Activated T-helper 2 cell treated with anti-CD3 and anti-CD28 coated beads, Interferon-gamma antibody, Interleukin-2, Interleukin-4, amounts not matched to agents 10 μg/mL and 5 μg/mL and 100 μg/mL, durations not matched to agents 14 hours and 24 hours and 36 hours (primary cell): ENCODE measurements at regions of chr20 and their contacts with region 1.

Region 1: DNA sequence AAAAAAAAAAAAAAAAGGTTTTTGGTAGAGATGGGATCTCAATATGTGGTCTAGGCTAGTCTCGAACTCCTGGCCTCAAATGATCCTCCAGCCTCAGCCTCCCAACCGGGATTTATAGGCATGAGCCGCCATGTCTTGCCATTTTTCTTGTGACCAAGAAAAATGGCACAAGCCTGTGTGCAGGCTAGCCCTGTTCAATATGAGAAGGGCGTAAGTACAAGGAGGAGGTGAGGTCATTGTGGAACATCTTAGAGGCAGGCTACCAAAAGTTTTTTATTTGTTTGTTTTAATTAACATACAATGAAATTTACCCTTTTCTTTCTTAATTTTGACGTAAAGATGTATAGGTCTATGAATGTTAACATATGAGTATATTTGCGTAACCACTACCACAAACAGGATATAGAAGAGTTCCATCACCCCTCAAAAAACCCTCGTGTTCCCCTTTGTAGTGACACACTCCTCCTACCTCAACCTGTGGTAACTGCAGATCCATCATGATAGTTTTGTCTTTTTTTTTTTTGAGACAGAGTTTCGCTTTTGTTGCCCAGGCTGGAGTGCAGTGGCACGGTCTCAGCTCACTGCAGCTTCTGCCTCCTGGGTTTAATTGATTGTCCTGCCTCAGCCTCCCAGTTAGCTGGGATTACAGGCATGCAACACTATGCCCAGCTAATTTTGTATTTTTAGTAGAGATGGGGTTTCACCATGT is 28.3 kb upstream of the KIF3B start:
- DNase-seq: peak; percentile 46
- H3K4me3 Mint-ChIP-seq: no peak overlapping the region
- H3K27ac Mint-ChIP-seq: peak overlapping the region; percentile 96
- H3K4me1 Mint-ChIP-seq: peaks cover 50% of the 10 kb centered on the region
- H3K27me3 Mint-ChIP-seq: no peaks in the 10 kb centered on the region

Region 2: DNA sequence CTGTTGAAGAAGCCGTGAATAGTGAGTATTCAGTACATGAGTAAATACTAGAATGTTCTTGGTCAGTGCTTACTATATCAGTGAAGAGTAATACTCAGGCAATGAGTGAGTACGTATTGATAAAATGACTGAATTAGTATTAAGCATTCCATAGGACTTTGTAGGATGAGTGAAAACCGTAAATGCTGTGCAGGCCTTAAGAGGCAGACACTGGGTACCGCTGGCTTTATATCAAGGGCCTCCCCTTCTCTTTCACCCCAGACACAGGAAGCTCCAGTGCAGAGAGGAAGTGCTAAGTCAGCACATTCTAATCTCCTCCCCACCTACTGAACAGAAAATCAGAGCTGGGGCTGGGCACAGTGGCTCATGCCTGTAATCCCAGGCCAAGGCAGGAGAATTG is 17.3 kb before region 1 on chr20:
- intact Hi-C with region 1: loop called (anchors 1 kb)
- DNase-seq: peak; percentile 20
- H3K4me3 Mint-ChIP-seq: peak overlapping the region; percentile 69
- H3K27ac Mint-ChIP-seq: peak overlapping the region; percentile 97
- H3K4me1 Mint-ChIP-seq: peaks cover 38% of the 10 kb centered on the region
- H3K27me3 Mint-ChIP-seq: no peaks in the 10 kb centered on the region

Region 3: GRCh38 chr20:32277361-32278198 is 28.4 kb after region 1 on chr20 and contains the start of gene KIF3B:
- intact Hi-C with region 1: loop called (anchors 1 kb)
- DNase-seq: peak; percentile 85
- H3K4me3 Mint-ChIP-seq: peak within 1 kb of the TSS; percentile 90
- H3K27ac Mint-ChIP-seq: peak within 1 kb of the TSS; percentile 85
- H3K4me1 Mint-ChIP-seq: peaks cover 41% of the 10 kb centered on the region
- H3K27me3 Mint-ChIP-seq: no peaks in the 10 kb centered on the region
- total RNA-seq, gene KIF3B: 40.6 and 42.2 TPM in 2 replicates

Region 4: GRCh38 chr20:32285621-32286371 is 36.6 kb after region 1 on chr20:
- intact Hi-C with region 1: loop called (anchors 1 kb)
- DNase-seq: peak; percentile 47
- H3K4me3 Mint-ChIP-seq: peak overlapping the region; percentile 60
- H3K27ac Mint-ChIP-seq: peak overlapping the region; percentile 84
- H3K4me1 Mint-ChIP-seq: peaks cover 60% of the 10 kb centered on the region
- H3K27me3 Mint-ChIP-seq: no peaks in the 10 kb centered on the region

Region 5: GRCh38 chr20:32391003-32391402 is 141.8 kb after region 1 on chr20:
- intact Hi-C with region 1: no loop called
- DNase-seq: no peak
- H3K4me3 Mint-ChIP-seq: no peak overlapping the region
- H3K27ac Mint-ChIP-seq: no peak overlapping the region
- H3K4me1 Mint-ChIP-seq: peaks cover 30% of the 10 kb centered on the region
- H3K27me3 Mint-ChIP-seq: no peaks in the 10 kb centered on the region